Left ventricle myocardium inferior (tissue), 1 donor: ENCODE measurements at regions of chr11 and their contacts with region 1.

Region 1: DNA sequence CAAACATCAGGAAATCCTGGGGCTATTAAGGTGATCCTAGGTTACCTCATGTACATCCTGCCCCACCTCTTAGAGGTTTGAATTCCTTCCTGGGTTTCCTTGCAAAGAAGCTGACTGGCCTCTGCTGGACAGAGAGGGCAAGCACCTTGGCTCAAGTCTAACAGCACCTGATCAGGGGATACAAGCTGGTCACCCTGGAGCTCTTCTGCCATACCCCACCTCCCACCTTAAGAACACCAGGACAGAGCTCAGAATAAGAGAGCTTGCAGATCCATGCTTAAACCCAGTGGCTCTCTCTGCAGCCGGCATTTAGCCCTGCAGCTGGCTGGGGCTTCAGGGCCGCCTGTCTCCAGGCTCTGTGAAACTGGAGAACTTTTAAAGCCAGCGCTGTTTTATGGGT is 386.6 kb upstream of the NARS2 start:
- DNase-seq: no peak
- H3K4me3 ChIP-seq: no peak overlapping the region
- H3K27ac ChIP-seq: no peak overlapping the region
- H3K4me1 ChIP-seq: peaks cover 8% of the 10 kb centered on the region
- H3K27me3 ChIP-seq: peaks cover 51% of the 10 kb centered on the region
- CTCF ChIP-seq: peak; percentile 56

Region 2: GRCh38 chr11:78798660-78799059 is 162.6 kb before region 1 on chr11:
- intact Hi-C with region 1: loop called (anchors 10 kb)
- DNase-seq: peak; percentile 72
- H3K4me3 ChIP-seq: no peak overlapping the region
- H3K27ac ChIP-seq: no peak overlapping the region
- H3K4me1 ChIP-seq: peaks cover 29% of the 10 kb centered on the region
- H3K27me3 ChIP-seq: no peaks in the 10 kb centered on the region
- CTCF ChIP-seq: peak; percentile 88

Region 3: GRCh38 chr11:79030448-79030847 is 69.2 kb after region 1 on chr11:
- intact Hi-C with region 1: no loop called
- DNase-seq: no peak
- H3K4me3 ChIP-seq: no peak overlapping the region
- H3K27ac ChIP-seq: no peak overlapping the region
- H3K4me1 ChIP-seq: peaks cover 10% of the 10 kb centered on the region
- H3K27me3 ChIP-seq: peaks cover 45% of the 10 kb centered on the region
- CTCF ChIP-seq: no peak